AG04450 (cell line): ENCODE measurements at regions of chr20 and their contacts with region 1.

Region 1: DNA sequence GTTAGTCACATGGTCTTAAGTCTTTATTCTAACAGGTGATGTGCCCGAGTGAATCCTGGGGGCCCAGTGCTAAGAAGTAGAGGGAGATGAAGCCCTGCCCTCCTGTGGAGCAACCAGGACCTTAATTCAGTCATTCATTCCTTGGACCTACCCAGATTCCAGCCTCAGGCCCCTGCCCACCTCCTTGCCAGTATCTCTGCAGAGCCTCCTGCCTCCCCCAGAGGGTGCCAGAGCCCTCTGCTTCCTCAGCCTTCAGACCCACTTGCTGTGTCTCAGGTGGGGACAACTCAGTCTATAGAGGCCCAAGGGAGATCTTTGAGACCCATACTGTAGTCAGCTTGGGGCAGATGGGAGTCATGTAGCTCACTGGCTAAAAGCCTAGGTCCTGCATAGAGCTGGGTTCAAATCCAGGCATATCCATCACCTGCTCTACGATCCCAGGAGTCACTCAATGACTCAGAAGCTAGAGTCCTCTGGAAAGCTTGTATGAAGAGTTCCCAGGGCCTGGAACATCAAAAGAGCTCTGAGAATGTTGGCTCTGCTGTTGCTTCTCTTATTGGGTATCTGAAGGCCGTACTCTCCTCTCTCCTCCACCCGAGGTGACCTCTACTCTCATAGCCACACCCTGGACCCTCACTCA is 3.9 kb upstream of the SIGLEC1 start:
- DNase-seq: no peak
- H3K4me3 ChIP-seq: no peak overlapping the region
- H3K27ac ChIP-seq: no peak overlapping the region
- H3K27me3 ChIP-seq: peaks cover 9% of the 10 kb centered on the region
- CTCF ChIP-seq: peak; percentile 87

Region 2: DNA sequence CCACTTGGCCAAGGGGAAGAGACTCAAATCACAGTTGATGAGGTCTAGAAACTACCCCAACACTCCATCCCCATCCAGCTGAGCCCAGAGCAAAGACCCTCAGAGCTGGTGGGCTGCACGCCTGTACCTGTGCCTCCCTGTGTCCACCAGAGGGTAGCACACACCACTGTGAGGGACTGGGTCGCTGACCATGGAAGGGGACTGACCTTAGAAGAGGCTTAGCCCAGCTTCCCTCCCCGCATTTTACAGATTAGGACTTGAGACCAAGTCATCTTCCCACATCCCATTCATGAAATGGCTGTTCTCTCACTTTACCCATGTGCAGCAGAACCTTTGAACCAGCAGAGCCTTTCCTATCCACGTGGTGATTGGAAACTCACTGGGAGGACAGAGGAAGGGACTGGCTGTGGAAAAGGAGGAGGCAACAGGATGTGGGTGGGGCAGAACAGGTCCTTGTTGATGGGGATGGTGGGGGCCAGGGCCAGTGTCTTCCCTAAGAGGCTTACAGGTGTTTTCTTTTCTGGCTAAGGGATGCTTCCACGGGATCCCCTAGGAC is 960.2 kb before region 1 on chr20:
- CTCF ChIA-PET with region 1: no interaction called
- POLR2A ChIA-PET with region 1: no interaction called
- DNase-seq: peak; percentile 27
- H3K4me3 ChIP-seq: no peak overlapping the region
- H3K27ac ChIP-seq: no peak overlapping the region
- H3K27me3 ChIP-seq: peaks cover 65% of the 10 kb centered on the region
- CTCF ChIP-seq: peak; percentile 85

Region 3: GRCh38 chr20:3727401-3728021 is 11.2 kb after region 1 on chr20:
- CTCF ChIA-PET with region 1: interaction called, 26 read pairs
- POLR2A ChIA-PET with region 1: no interaction called
- DNase-seq: no peak
- H3K4me3 ChIP-seq: peak overlapping the region; percentile 21
- H3K27ac ChIP-seq: peak overlapping the region; percentile 42
- H3K27me3 ChIP-seq: peaks cover 49% of the 10 kb centered on the region
- CTCF ChIP-seq: 0 out of 2 replicates have a peak, but pooled peaks have one; percentile 6

Region 4: GRCh38 chr20:3854462-3854871 is 138.2 kb after region 1 on chr20:
- CTCF ChIA-PET with region 1: interaction called, 11 read pairs
- POLR2A ChIA-PET with region 1: no interaction called
- DNase-seq: no peak
- H3K4me3 ChIP-seq: no peak overlapping the region
- H3K27ac ChIP-seq: no peak overlapping the region
- H3K27me3 ChIP-seq: no peaks in the 10 kb centered on the region
- CTCF ChIP-seq: no peak